H1 (cell line): ENCODE measurements at regions of chr7 and their contacts with region 1.

Region 1: DNA sequence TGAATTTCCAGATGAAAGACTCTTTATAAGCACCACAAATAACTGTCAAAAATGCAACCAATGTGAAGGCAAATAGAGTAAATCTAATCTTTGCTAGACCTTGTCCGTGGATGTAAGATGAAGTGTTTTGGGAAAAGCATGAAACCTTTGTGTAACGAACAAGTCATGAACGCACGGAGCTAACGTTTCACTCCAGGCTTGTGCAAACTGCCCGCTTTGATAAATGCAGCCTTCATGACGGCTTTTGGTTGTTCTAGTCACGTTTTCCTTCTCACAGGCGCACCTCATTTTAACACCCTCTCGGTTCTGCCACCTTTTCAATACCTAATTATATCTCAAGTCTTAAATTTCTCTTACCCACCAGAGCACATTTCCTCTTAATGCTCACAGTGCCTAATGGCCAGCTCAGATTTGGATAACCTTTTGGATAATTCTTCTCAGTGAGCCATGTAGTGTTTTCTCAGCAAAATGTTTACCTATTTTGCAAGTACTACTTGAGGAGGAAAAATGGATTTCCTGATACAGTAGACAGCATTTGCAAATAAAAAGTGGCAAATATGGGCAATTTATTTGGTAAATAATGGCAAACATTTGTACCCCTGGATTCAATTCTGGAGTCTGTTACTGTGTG is 63.2 kb downstream of the HECW1 start:
- DNase-seq: no peak
- H3K4me3 ChIP-seq: no peak overlapping the region
- H3K27ac ChIP-seq: no peak overlapping the region
- H3K4me1 ChIP-seq: peaks cover 0 to 6% (median 3%) of the 10 kb centered on the region in 4 experiments; a peak in 5 of 7 replicates
- H3K27me3 ChIP-seq: no peaks in the 10 kb centered on the region
- CTCF ChIP-seq: no peak
- EP300 ChIP-seq: no peak
- POLR2A ChIP-seq: no peak
- RAD21 ChIP-seq: no peak

Region 2: DNA sequence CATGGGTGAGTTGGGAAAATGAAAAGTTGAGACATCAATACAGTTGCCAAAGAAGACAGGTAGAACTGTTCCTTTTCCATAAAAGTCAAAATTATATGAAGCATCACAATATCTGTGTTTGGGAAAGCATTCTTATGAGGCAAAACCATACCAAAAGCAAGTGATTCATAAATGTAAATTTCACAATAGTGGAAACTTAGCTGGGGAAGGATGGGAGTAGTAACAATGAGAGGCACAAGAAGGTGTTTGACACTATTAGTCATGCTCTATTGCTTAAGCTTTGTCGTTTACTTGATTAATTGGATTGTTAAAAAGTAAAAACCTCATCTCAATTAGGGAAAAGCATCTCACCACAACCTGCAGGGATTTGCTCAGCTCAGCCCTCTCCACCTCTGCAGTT is 504.1 kb before region 1 on chr7:
- CTCF ChIA-PET with region 1: no interaction called
- POLR2A ChIA-PET with region 1: no interaction called
- DNase-seq: no peak
- H3K4me3 ChIP-seq: no peak overlapping the region
- H3K27ac ChIP-seq: no peak overlapping the region
- H3K4me1 ChIP-seq: no peaks in the 10 kb centered on the region
- H3K27me3 ChIP-seq: no peaks in the 10 kb centered on the region
- CTCF ChIP-seq: no peak
- EP300 ChIP-seq: no peak
- POLR2A ChIP-seq: no peak
- RAD21 ChIP-seq: no peak

Region 3: DNA sequence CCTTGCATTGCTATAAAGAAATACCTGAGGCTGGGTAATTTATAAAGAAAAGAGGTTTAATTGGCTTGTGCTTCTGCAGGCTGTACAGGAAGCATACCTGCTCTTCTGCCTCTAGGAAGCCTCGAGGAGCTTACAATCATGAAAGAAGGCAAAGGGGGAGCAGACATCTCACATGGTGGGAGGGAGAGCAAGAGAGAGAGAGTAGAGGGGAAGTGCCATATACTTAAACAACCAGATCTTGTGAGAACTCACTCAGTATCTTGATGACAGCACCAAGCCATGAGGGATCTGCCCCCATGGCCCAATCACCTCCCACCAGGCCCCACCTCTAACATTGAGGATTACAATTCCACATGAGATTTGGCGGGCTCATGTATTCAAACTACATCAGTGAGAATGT is 142.3 kb before region 1 on chr7:
- CTCF ChIA-PET with region 1: no interaction called
- POLR2A ChIA-PET with region 1: no interaction called
- DNase-seq: no peak
- H3K4me3 ChIP-seq: no peak overlapping the region
- H3K27ac ChIP-seq: no peak overlapping the region
- H3K4me1 ChIP-seq: no peaks in the 10 kb centered on the region
- H3K27me3 ChIP-seq: no peaks in the 10 kb centered on the region
- CTCF ChIP-seq: no peak
- EP300 ChIP-seq: no peak
- POLR2A ChIP-seq: no peak
- RAD21 ChIP-seq: no peak

Region 4: GRCh38 chr7:43196379-43196778 is 20.7 kb after region 1 on chr7:
- CTCF ChIA-PET with region 1: interaction called, 22 read pairs
- POLR2A ChIA-PET with region 1: no interaction called
- DNase-seq: no peak
- H3K4me3 ChIP-seq: no peak overlapping the region
- H3K27ac ChIP-seq: no peak overlapping the region
- H3K4me1 ChIP-seq: peaks cover 7 to 32% (median 21%) of the 10 kb centered on the region in 4 experiments
- H3K27me3 ChIP-seq: no peaks in the 10 kb centered on the region
- CTCF ChIP-seq: no peak
- EP300 ChIP-seq: no peak
- POLR2A ChIP-seq: no peak
- RAD21 ChIP-seq: no peak